ENCODE measurements at regions of chr1 and their contacts with region 1.

Region 1: GRCh38 chr1:87151500-87152421 is 176.9 kb upstream of the LMO4 start:
- DNase-seq: no peak
- H3K4me3 Mint-ChIP-seq: no peak overlapping the region
- H3K27ac Mint-ChIP-seq: no peak overlapping the region
- H3K4me1 Mint-ChIP-seq: peaks cover 7% of the 10 kb centered on the region
- H3K27me3 Mint-ChIP-seq: no peaks in the 10 kb centered on the region
- CTCF ChIP-seq: no peak

Region 2: GRCh38 chr1:87179851-87180519 is 28.2 kb after region 1 on chr1:
- CTCF ChIA-PET with region 1: no interaction called
- POLR2A ChIA-PET with region 1: no interaction called
- intact Hi-C with region 1: loop called (anchors 1 kb)
- DNase-seq: no peak
- H3K4me3 Mint-ChIP-seq: no peak overlapping the region
- H3K27ac Mint-ChIP-seq: no peak overlapping the region
- H3K4me1 Mint-ChIP-seq: peaks cover 6% of the 10 kb centered on the region
- H3K27me3 Mint-ChIP-seq: no peaks in the 10 kb centered on the region
- CTCF ChIP-seq: no peak

Region 3: GRCh38 chr1:87212431-87213134 is 60.8 kb after region 1 on chr1:
- CTCF ChIA-PET with region 1: no interaction called
- POLR2A ChIA-PET with region 1: no interaction called
- intact Hi-C with region 1: loop called (anchors 5 kb)
- DNase-seq: no peak
- H3K4me3 Mint-ChIP-seq: no peak overlapping the region
- H3K27ac Mint-ChIP-seq: no peak overlapping the region
- H3K4me1 Mint-ChIP-seq: no peaks in the 10 kb centered on the region
- H3K27me3 Mint-ChIP-seq: no peaks in the 10 kb centered on the region
- CTCF ChIP-seq: no peak

Region 4: DNA sequence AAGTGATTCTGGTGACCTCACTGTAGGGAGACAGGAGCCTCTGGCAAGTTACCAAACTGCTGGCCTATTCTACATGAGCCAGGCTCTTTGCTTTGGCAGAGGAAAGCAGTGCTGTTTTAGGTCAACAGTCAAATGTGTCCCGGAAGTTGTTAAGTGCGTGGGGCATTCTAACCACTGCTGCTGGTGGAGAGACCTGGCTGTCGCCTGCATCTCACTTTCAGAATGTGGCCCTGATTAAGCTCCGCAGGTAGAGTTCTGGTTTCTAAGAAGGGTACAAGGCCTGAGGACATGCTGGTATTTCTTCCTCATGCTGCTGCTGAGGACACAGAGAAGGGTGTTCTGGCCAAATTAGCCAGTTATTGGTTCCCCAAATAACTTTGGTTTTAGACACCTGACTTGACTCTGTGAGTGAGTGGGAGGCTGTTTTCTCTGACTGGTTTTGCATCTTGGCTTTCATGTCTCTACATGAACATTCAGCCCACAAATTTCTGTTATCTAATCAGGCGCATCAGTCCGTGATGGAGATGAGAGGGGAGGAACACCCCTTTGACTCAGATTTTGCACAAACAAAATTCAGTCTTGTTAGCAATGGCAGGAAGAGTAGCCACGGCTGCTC is 297.7 kb after region 1 on chr1:
- CTCF ChIA-PET with region 1: no interaction called
- POLR2A ChIA-PET with region 1: no interaction called
- intact Hi-C with region 1: no loop called
- DNase-seq: no peak
- H3K4me3 Mint-ChIP-seq: no peak overlapping the region
- H3K27ac Mint-ChIP-seq: no peak overlapping the region
- H3K4me1 Mint-ChIP-seq: no peaks in the 10 kb centered on the region
- H3K27me3 Mint-ChIP-seq: no peaks in the 10 kb centered on the region
- CTCF ChIP-seq: no peak

Measured in MCF 10A (cell line).